CD14-positive monocyte (primary cell): ENCODE measurements at regions of chr4 and their contacts with region 1.

Region 1: GRCh38 chr4:165124463-165124862 is 11.8 kb upstream of the TMEM192 start:
- DNase-seq: no peak
- H3K4me3 ChIP-seq: no peak overlapping the region
- H3K4me3 Mint-ChIP-seq: peak overlapping the region; percentile 7 to 39
- H3K27ac ChIP-seq: no peak overlapping the region
- H3K27ac Mint-ChIP-seq: no peak overlapping the region
- H3K4me1 ChIP-seq: no peaks in the 10 kb centered on the region
- H3K4me1 Mint-ChIP-seq: peaks cover 3% of the 10 kb centered on the region
- H3K27me3 ChIP-seq: no peaks in the 10 kb centered on the region
- H3K27me3 Mint-ChIP-seq: peaks cover 0 to 4% (median 2%) of the 10 kb centered on the region in 3 donors
- CTCF ChIP-seq: no peak

Region 2: GRCh38 chr4:164424846-164425245 is 699.6 kb before region 1 on chr4:
- intact Hi-C with region 1: no loop called
- DNase-seq: no peak
- H3K4me3 ChIP-seq: no peak overlapping the region
- H3K4me3 Mint-ChIP-seq: no peak overlapping the region
- H3K27ac ChIP-seq: no peak overlapping the region
- H3K27ac Mint-ChIP-seq: no peak overlapping the region
- H3K4me1 ChIP-seq: no peaks in the 10 kb centered on the region
- H3K4me1 Mint-ChIP-seq: no peaks in the 10 kb centered on the region
- H3K27me3 ChIP-seq: no peaks in the 10 kb centered on the region
- H3K27me3 Mint-ChIP-seq: peaks cover 0 to 2% (median 0%) of the 10 kb centered on the region in 3 donors
- CTCF ChIP-seq: no peak

Region 3: DNA sequence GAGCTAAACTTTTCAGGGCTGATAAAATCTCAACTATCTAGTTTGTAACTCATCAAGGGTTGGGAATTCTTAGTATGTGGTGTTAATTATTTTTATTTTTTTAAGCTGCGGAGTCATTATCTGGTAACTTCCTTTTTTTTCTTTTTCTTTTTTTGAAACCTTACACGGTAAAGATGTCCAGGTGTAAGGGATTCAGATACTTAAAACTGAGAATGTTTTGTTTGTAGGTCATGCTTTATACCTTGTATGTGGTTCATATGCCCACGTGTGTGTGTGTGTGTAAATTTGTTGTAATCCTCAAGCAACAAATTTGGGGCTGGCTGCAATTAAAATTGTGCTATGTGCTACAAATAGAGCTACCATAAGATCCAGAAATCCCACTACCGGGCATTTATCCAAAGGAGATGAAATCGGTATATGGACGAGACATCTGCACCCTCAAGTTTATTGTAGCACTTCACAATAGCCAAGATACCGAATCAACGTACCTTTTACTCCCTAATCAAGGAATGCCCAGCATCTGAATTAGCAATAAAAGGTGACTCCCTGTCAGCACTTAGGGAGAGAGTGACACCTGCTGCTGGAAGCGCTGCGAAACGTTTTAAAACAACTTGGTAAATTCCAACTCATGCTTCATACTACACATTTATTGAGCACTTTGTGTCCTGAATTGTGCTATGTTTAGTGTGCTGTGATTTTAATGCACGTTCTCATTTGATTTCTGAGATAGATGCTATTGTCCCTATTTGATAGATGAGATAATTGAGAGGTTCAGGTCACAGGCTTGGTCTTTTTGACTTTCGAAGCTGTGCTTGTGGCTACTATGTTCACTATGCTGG is 219.1 kb after region 1 on chr4:
- intact Hi-C with region 1: loop called in 1 of 2 experiments (anchors 10 kb)
- DNase-seq: peak in 1 of 3 donors; percentile 15
- H3K4me3 ChIP-seq: no peak overlapping the region
- H3K4me3 Mint-ChIP-seq: no peak overlapping the region
- H3K27ac ChIP-seq: no peak overlapping the region
- H3K27ac Mint-ChIP-seq: no peak overlapping the region
- H3K4me1 ChIP-seq: no peaks in the 10 kb centered on the region
- H3K4me1 Mint-ChIP-seq: no peaks in the 10 kb centered on the region
- H3K27me3 ChIP-seq: no peaks in the 10 kb centered on the region
- H3K27me3 Mint-ChIP-seq: peaks cover 0 to 4% (median 0%) of the 10 kb centered on the region in 3 donors
- CTCF ChIP-seq: peak; percentile 27